Endothelial cell of umbilical vein (primary cell): ENCODE measurements at regions of chr20 and their contacts with region 1.

Region 1: GRCh38 chr20:36808317-36809257 is 35.0 kb upstream of the DSN1 start:
- DNase-seq: peak; percentile 36
- H3K4me3 ChIP-seq: no peak overlapping the region
- H3K27ac ChIP-seq: no peak overlapping the region
- H3K4me1 ChIP-seq: no peaks in the 10 kb centered on the region
- H3K27me3 ChIP-seq: no peaks in the 10 kb centered on the region
- CTCF ChIP-seq: peak; percentile 84 to 90
- POLR2A ChIP-seq: no peak

Region 2: GRCh38 chr20:36061754-36062153 is 746.8 kb before region 1 on chr20:
- CTCF ChIA-PET with region 1: no interaction called
- POLR2A ChIA-PET with region 1: no interaction called
- dilution Hi-C with region 1: no loop called
- intact Hi-C with region 1: no loop called
- DNase-seq: no peak
- H3K4me3 ChIP-seq: no peak overlapping the region
- H3K27ac ChIP-seq: no peak overlapping the region
- H3K4me1 ChIP-seq: no peaks in the 10 kb centered on the region
- H3K27me3 ChIP-seq: no peaks in the 10 kb centered on the region
- CTCF ChIP-seq: no peak
- POLR2A ChIP-seq: no peak

Region 3: GRCh38 chr20:36754656-36755222 is 53.8 kb before region 1 on chr20:
- CTCF ChIA-PET with region 1: interaction called, 11 read pairs
- POLR2A ChIA-PET with region 1: no interaction called
- dilution Hi-C with region 1: no loop called
- intact Hi-C with region 1: no loop called
- DNase-seq: peak; percentile 78
- H3K4me3 ChIP-seq: no peak overlapping the region
- H3K27ac ChIP-seq: peak overlapping the region; percentile 16
- H3K4me1 ChIP-seq: peaks cover 27% of the 10 kb centered on the region
- H3K27me3 ChIP-seq: no peaks in the 10 kb centered on the region
- CTCF ChIP-seq: peak; percentile 71 to 75
- POLR2A ChIP-seq: no peak

Region 4: DNA sequence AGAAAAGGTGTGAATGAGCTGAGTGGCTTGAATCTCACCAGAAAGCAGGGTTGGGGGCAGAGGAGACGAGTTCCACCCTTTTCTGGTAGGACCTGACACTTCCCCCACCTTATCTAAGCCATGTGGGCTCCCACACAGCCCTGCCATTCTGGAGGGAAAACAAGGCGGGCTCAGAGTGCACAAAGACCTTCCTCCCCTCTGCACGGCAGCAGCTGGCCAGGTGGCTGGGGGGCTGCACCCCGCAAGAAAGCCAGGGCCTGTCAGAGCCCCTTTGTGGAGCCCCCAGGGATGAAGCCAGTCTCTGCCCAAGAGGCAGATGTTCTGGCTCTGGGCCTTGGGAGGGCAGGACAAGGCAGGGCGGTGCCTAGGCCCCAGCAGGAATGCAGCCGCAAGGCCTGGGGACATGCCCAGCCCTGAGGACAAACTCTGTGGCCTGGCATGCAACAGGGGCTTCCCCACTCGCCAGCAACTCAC is 13.4 kb after region 1 on chr20:
- CTCF ChIA-PET with region 1: interaction called, 40 read pairs
- POLR2A ChIA-PET with region 1: no interaction called
- dilution Hi-C with region 1: no loop called
- intact Hi-C with region 1: no loop called
- DNase-seq: no peak
- H3K4me3 ChIP-seq: no peak overlapping the region
- H3K27ac ChIP-seq: no peak overlapping the region
- H3K4me1 ChIP-seq: peaks cover 2% of the 10 kb centered on the region
- H3K27me3 ChIP-seq: no peaks in the 10 kb centered on the region
- CTCF ChIP-seq: no peak
- POLR2A ChIP-seq: no peak

Region 5: DNA sequence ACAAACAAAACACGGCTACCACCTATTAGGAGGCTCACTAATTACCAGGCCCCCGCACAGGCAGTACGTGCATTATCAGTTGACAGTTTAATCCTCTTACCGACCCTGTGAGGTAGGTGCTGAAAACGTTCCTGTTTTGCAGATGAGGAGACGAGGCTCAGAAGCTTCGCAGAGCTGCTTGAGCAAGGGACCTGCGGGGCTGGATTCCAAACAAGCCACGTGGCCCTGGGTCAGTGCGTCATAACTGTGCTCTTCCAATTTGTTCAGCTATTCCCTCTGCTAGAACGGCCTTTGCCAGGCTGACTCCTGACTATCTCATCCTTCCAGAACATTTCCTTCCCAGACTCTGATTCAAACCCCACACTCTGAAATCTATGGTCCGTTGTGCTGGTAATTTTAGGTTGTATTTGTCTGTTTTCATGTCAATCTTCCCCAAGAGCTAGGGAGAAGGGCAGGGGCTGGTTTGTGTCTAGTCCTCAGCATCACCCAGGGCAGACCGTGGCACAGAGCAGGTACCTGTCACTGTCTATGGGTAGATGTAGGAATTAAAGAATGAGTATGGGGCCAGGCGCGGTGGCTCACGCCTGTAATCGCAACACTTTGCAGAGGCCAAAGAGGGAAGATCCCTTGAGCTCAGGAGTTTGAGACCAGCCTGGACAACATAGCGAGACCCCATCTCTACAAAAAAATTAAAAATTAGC is 38.6 kb after region 1 on chr20:
- CTCF ChIA-PET with region 1: interaction called, 14 read pairs
- POLR2A ChIA-PET with region 1: no interaction called
- dilution Hi-C with region 1: no loop called
- intact Hi-C with region 1: no loop called
- DNase-seq: no peak
- H3K4me3 ChIP-seq: no peak overlapping the region
- H3K27ac ChIP-seq: no peak overlapping the region
- H3K4me1 ChIP-seq: peaks cover 15% of the 10 kb centered on the region
- H3K27me3 ChIP-seq: no peaks in the 10 kb centered on the region
- CTCF ChIP-seq: no peak
- POLR2A ChIP-seq: no peak

Region 6: DNA sequence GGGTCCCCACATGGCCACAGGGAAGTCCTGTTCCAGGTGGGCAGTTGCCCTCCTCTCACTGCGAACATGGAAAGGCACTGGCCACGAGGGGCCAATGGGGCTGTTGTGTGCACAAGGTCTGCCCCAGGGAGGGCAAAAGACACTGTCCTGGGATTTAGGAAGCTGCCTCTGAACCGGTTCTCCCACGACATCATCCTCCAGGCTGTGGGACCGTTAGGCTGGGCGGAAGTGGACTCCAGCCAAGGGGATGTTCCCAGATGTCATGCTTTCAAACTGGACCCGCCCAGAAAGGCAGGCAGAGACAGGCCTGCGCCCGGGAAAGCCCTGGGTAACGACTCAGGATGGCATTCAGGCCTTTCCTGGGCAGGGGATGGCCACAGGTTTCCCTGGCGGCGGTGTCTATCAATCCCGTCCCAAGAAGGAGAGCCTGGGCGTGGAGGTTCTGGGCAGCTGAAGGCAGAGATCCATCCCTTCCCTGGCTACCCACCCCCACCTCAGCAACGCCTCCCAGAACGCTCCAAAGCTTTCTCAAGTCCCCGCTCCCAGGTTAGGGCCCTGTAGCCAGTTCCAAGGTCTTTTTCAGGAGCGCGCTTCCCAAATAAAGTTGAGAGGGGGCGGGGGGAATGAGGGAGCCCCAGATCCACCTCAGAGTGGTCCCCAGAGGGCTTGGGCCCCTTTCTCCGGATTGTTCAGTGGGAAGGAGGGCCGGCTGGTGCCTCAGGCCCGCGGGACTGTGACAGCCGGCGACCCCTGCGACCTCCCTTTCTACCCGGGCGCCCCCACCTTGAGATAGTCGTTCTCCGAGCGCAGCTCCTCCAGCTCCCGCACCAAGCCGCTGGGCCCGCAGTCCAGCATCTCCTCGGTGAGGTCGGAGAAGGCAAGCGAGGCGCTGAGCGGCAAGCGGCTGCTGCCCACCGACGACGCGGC is 53.6 kb after region 1 on chr20:
- CTCF ChIA-PET with region 1: interaction called, 60 read pairs
- POLR2A ChIA-PET with region 1: no interaction called
- dilution Hi-C with region 1: no loop called
- intact Hi-C with region 1: loop called (anchors 2 kb)
- DNase-seq: peak; percentile 44
- H3K4me3 ChIP-seq: peak overlapping the region; percentile 27 to 54 (median 41)
- H3K27ac ChIP-seq: no peak overlapping the region
- H3K4me1 ChIP-seq: peaks cover 18% of the 10 kb centered on the region
- H3K27me3 ChIP-seq: no peaks in the 10 kb centered on the region
- CTCF ChIP-seq: no peak
- POLR2A ChIP-seq: peak; percentile 45

Region 7: DNA sequence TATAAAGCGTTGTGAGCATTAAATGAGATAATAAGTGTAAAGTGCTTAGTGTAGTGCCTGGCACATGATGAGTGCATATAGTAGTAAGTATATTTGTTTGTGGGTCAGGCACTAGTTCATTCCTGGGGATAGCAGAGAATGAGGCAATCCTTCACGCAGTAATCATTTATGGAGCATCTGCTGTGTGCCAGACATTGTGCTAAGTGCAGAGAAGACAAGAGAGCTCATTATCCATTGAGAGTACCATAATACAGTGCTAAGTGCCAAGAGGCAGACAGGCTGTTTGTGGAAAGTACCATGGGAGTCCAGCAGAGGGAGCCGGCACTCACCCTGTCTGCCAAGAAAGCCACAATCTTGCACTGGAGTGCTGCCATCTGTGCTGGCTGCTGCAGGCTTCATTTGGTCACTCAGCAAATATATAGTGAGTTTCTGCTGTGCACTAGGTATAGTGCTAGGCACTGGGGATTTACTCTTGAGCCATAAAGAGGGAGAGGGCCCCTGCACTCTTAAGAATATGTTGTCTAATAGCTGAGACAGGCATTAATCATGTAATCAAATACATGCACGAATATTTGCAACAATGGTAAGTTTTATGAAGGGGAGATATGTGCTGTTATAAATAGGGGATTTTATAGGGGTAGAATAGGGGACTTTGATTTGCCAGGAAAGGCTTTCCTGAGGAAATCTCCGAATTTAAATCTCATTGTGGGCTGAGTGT is 383.7 kb after region 1 on chr20:
- CTCF ChIA-PET with region 1: no interaction called
- POLR2A ChIA-PET with region 1: no interaction called
- dilution Hi-C with region 1: no loop called
- intact Hi-C with region 1: no loop called
- DNase-seq: peak; percentile 85
- H3K4me3 ChIP-seq: no peak overlapping the region
- H3K27ac ChIP-seq: no peak overlapping the region
- H3K4me1 ChIP-seq: no peaks in the 10 kb centered on the region
- H3K27me3 ChIP-seq: no peaks in the 10 kb centered on the region
- CTCF ChIP-seq: peak; percentile 84 to 92
- POLR2A ChIP-seq: no peak